Ovary (tissue), 10 donors: ENCODE measurements at regions of chr13 and their contacts with region 1.

Region 1: DNA sequence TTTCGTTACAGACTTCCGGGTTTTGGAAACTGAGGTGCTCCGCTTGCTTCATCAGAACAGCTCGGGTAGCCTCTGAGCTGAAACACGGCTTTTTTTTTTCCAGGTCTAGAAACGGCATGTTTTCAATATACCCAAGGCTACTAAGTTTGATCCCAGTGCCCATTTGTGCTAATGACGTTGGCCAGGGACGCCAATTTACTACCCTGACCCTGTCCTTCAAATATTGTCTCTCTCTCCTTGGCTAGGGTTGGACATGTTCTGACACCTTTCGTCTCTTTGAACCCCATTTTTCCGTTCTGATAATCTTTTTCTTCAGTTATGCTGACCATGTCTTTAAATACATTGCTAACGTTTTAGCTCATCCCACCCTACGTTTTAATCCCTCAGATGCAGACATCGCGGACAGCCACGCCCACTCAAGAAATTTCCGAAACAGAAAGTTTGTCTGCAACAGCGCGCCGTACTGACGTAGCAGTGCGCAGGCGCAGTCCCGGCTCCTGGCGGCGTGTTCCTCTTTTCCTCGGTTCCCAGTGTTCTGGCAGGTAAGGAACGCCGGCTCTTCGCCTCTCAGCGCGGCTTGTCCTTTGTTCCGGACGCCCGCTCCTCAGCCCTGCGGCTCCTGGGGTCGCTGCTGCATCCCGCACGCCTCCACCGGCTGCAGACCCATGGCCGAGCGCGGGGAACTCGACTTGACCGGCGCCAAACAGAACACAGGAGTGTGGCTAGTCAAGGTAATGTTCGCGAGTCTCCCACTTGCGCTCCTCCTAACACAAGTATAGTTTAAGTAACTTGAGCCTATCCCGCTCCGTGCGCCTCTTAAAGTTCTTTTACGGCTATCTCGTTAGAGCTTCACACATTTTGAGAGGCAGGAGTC is at the start of gene GTF2F2:
- DNase-seq: peak; percentile 88 to 94 (median 93)
- H3K4me3 ChIP-seq: peak within 1 kb of the TSS; percentile 90
- H3K27ac ChIP-seq: peak within 1 kb of the TSS in 1 of 2 donors; percentile 83
- H3K4me1 ChIP-seq: peaks cover 10% of the 10 kb centered on the region
- H3K27me3 ChIP-seq: no peaks in the 10 kb centered on the region
- CTCF ChIP-seq: no peak
- EP300 ChIP-seq: no peak
- POLR2A ChIP-seq: no peak
- total RNA-seq, gene GTF2F2: 13.6 to 19.2 (median 14.6) TPM

Region 2: DNA sequence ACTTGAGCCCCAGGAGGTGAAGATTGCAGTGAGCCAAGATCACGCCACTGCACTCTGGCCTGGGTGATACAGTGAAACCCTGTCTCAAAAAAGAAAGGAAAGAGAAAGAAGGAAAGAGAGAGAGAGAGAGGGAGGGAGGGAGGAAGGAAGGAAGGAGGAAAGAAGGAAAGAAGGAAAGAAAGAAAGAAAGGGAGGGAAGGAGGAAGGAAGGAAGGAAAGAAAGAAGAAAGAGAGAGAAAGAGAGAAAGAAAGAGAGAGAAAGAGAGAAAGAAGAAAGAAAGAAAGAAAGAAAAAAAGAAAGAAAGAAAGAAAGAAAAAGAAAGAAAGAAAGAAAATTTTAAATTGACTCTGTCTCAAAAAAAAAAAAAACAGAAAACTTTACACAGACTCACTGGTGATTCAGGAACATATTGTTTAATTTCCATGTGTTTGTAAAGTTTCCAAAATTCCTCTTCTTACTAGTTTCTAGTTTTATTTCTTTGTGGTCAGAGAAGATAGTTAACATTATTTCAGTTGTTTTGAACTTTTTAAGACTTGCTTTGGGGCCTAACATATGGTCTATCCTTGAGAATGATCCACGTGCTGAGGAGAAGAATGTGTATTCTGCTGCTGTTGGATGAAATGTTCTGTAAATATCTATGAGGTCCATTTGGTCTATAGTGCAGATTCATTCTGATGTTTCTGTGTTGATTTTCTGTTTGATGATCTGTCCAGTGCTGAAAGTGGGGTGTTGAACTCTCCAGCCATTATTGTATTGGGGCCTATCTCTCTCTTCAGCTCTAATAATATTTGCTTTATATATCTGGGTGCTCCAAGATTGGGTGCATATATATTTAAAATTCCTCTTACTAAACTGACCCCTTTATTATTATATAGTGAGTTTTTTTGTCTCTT is 951.0 kb before region 1 on chr13:
- intact Hi-C with region 1: loop called in 1 of 4 experiments (anchors 5 kb)
- DNase-seq: no peak
- H3K4me3 ChIP-seq: no peak overlapping the region
- H3K27ac ChIP-seq: no peak overlapping the region
- H3K4me1 ChIP-seq: no peaks in the 10 kb centered on the region
- H3K27me3 ChIP-seq: no peaks in the 10 kb centered on the region
- CTCF ChIP-seq: no peak
- EP300 ChIP-seq: no peak
- POLR2A ChIP-seq: no peak

Region 3: GRCh38 chr13:45194081-45194939 is 74.1 kb after region 1 on chr13:
- intact Hi-C with region 1: no loop called
- DNase-seq: peak; percentile 24 to 55 (median 52)
- H3K4me3 ChIP-seq: no peak overlapping the region
- H3K27ac ChIP-seq: no peak overlapping the region
- H3K4me1 ChIP-seq: peaks cover 2% of the 10 kb centered on the region
- H3K27me3 ChIP-seq: no peaks in the 10 kb centered on the region
- CTCF ChIP-seq: no peak
- EP300 ChIP-seq: no peak
- POLR2A ChIP-seq: no peak

Region 4: GRCh38 chr13:45340422-45340925 is 220.2 kb after region 1 on chr13:
- intact Hi-C with region 1: no loop called
- DNase-seq: peak; percentile 94 to 96 (median 95)
- H3K4me3 ChIP-seq: peak overlapping the region; percentile 100
- H3K27ac ChIP-seq: peak overlapping the region; percentile 99 to 100
- H3K4me1 ChIP-seq: peaks cover 3% of the 10 kb centered on the region
- H3K27me3 ChIP-seq: no peaks in the 10 kb centered on the region
- CTCF ChIP-seq: peak; percentile 72 to 81 (median 73)
- EP300 ChIP-seq: peak; percentile 87
- POLR2A ChIP-seq: peak; percentile 9

Region 5: DNA sequence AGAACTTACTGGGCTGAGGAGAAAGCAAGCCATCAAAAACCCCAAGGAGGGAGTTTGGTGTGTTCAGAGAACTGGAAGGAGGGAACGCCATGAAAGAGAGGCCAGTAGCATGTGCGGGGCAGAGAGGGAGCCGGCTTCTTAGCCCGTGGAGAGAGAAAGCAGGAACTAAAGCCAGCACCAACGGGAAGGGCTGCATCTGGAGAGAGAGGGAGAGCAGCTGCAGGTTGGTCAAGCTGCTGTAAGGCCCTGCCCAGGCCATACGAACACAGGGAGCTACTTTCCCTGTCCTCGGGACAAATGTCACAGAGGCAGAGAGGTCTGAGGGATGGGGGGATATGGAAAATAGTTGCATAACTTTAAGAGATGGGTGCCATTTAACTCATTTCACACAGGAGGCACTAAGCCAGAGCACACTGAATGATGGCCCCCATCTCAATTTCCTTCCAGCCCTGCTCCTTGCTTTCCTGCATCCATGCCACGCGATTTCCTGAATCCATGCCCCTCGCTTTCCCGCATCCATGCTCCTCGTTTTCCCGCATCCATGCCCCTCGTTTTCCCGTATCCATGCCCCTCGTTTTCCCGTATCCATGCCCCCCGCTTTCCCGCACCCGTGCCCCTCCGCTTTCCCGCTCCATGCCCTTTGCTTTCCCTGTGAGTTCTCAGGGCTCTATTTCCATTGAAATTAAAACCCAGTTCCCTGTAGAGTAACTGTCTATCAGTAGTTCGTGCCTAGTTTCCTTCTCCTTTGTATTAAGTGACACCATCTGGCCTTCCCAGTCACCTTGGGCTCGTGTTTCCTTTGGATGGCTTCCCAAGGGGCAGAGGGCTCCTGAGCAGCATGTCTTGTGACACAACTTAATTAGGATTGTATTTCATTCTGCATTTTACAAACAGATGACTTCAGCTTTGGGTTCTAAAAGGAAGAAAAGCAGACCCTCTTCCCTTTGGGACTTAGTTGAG is 252.2 kb after region 1 on chr13:
- intact Hi-C with region 1: no loop called
- DNase-seq: no peak
- H3K4me3 ChIP-seq: no peak overlapping the region
- H3K27ac ChIP-seq: no peak overlapping the region
- H3K4me1 ChIP-seq: peaks cover 3% of the 10 kb centered on the region
- H3K27me3 ChIP-seq: no peaks in the 10 kb centered on the region
- CTCF ChIP-seq: no peak
- EP300 ChIP-seq: no peak
- POLR2A ChIP-seq: no peak